A549 (cell line): ENCODE measurements at regions of chr15 and their contacts with region 1.

Region 1: GRCh38 chr15:63188926-63189871 is at the start of gene RAB8B:
- DNase-seq: peak; percentile 87 to 96
- ATAC-seq: peak; percentile 92 to 98
- H3K4me3 ChIP-seq: peak within 1 kb of the TSS; percentile 68
- H3K27ac ChIP-seq: peak within 1 kb of the TSS; percentile 75 to 93
- H3K4me1 ChIP-seq: peaks cover 42% of the 10 kb centered on the region
- CTCF ChIP-seq: no peak
- EP300 ChIP-seq: no peak
- POLR2A ChIP-seq: peak; percentile 71
- RAD21 ChIP-seq: peak in 1 of 2 experiments; percentile 16; a peak in 1 of 5 replicates
- polyA plus RNA-seq, gene RAB8B: 28.8 and 41.4 TPM in 2 replicates

Region 2: DNA sequence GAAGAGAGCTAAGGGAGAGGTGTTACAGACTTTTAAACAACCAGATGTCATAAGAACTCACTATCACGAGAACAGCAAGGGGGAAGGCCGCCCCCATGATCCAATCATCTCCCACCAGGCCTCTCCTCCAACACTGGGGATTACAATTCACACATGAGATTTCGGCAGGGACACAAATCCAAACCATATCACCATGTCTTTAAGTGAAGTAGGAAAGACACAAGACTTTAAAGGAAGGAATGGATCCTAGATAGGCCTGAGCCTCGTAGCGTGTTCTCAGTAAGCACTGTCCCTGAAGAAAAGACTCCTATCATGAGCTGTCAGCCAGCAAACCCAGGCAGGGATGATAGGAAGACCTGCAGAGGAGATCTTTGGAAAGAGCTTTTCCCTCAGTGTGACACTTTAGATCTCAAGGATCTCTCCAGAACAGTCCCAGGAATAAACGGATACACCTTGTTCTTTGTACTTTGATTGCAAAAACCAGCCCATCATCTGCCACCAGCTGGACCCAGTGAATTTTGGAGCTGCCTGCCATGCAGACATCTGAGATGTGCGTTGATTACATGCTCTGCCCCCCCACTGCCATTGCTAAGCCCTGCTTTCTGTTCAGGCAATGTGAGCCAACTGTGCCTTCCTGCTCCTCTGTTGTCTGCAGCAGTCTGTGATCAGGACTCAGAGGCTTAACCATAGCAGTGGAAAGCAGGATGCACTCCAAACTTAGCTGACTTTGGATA is 16.7 kb before region 1 on chr15:
- CTCF ChIA-PET with region 1: interaction called, 12 read pairs
- POLR2A ChIA-PET with region 1: interaction called, 4 read pairs
- DNase-seq: no peak
- ATAC-seq: 0 out of 6 replicates have a peak, but pooled peaks of 1 of the 2 experiments have one; percentile 12
- H3K4me3 ChIP-seq: no peak overlapping the region
- H3K27ac ChIP-seq: no peak overlapping the region
- H3K4me1 ChIP-seq: peaks cover 7% of the 10 kb centered on the region; the same call in 2 of the 3 replicates
- CTCF ChIP-seq: no peak
- EP300 ChIP-seq: no peak
- POLR2A ChIP-seq: no peak
- RAD21 ChIP-seq: no peak

Region 3: DNA sequence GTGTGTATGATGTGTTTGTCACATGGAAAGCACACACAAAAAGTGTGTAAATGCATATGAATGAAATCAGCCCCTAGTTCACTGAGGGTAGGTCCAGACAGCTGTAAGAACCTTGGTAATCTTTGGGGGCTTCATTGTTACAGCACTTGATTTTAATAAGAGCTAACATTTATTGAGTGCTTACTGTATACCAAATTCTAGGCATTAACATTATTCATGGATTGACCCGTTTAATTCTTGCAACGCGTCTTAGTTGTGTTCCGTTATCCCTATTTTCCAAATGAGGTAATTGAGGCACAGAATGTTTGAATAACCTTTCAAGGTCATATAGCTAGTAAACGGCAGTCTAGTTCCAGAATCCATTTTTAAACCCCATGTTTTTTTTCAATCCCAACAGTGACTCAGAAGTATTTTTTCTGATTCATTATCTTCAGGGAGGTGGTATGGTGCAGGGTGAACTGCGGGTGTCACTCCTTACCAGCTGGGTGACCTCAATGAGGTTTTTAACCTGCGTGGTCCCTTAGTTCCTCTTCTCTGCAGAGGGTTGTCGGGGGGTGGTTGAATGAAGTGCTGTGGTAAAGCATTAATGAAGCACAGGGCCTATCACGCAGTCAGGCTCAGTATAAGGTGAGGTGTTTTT is 14.4 kb after region 1 on chr15:
- CTCF ChIA-PET with region 1: interaction called, 16 read pairs
- POLR2A ChIA-PET with region 1: no interaction called
- DNase-seq: no peak
- ATAC-seq: peak; percentile 45 to 50; a peak in 2 of 6 replicates
- H3K4me3 ChIP-seq: no peak overlapping the region
- H3K27ac ChIP-seq: no peak overlapping the region
- H3K4me1 ChIP-seq: peaks cover 32% of the 10 kb centered on the region
- CTCF ChIP-seq: no peak; the same call in 2 of the 3 replicates
- EP300 ChIP-seq: no peak
- POLR2A ChIP-seq: no peak
- RAD21 ChIP-seq: peak; percentile 16 to 29; a peak in 1 of 5 replicates